Heart left ventricle (tissue), 16 donors: ENCODE measurements at regions of chr14 and their contacts with region 1.

Region 1: GRCh38 chr14:68248481-68249255 is 429.1 kb downstream of the RAD51B start:
- DNase-seq: peak in 3 of 5 donors; percentile 32 to 66 (median 39)
- ATAC-seq: peak; percentile 56 to 75 (median 70)
- H3K4me3 ChIP-seq: no peak overlapping the region
- H3K27ac ChIP-seq: peak overlapping the region in 11 of 12 donors; percentile 23 to 91 (median 85)
- H3K4me1 ChIP-seq: peaks cover 17 to 84% (median 78%) of the 10 kb centered on the region in 12 donors
- H3K27me3 ChIP-seq: no peaks in the 10 kb centered on the region
- CTCF ChIP-seq: peak; percentile 54 to 80 (median 68)
- POLR2A ChIP-seq: no peak

Region 2: GRCh38 chr14:68146807-68147206 is 101.9 kb before region 1 on chr14:
- intact Hi-C with region 1: loop called in 3 of 10 experiments (anchors 1 to 5 kb)
- DNase-seq: no peak
- ATAC-seq: peak in 2 of 4 donors; percentile 14 to 36
- H3K4me3 ChIP-seq: no peak overlapping the region
- H3K27ac ChIP-seq: peak overlapping the region in 9 of 12 donors; percentile 15 to 89 (median 64)
- H3K4me1 ChIP-seq: peaks cover 0 to 40% (median 20%) of the 10 kb centered on the region in 12 donors
- H3K27me3 ChIP-seq: no peaks in the 10 kb centered on the region
- CTCF ChIP-seq: no peak
- POLR2A ChIP-seq: no peak

Region 3: DNA sequence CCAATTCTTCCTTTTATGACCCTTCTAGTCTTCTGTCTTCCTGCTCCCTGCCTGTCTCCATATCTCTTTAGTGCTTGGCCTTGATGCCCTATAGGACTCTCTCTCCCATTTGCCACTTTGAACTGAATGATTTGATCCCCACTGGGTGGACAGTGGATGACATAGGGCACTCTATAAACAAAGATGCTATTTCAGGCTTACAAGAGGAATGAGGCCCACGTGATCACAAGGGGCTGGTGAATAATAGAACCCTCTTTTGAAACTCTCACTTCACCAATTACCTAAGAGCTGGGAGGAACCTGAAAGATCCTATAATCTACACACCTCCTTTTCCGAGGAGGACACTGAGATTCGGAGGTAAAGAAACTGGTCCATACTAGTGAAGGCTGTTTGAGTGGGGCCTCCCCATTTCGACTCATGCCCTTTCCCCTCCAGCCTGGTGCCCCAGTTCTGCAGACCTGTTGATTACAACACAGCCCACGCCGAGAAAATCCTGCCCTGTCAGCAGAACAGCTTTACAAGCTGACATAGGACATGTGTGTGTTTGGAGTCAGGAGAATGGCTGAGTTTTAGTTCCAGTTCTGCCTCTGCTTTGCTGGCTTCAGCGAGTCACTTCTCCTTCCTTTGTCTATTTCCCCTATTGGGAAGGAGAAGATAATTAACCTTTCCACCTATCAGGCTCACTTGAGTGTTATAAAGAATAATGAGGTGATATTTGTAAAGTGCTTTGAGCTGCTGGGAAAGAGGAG is 143.9 kb after region 1 on chr14:
- intact Hi-C with region 1: loop called in 2 of 10 experiments (anchors 10 kb)
- DNase-seq: peak; percentile 62 to 80 (median 73)
- ATAC-seq: peak in 3 of 4 donors; percentile 47 to 52 (median 50)
- H3K4me3 ChIP-seq: no peak overlapping the region
- H3K27ac ChIP-seq: peak overlapping the region; percentile 46 to 92 (median 66)
- H3K4me1 ChIP-seq: peaks cover 4 to 75% (median 31%) of the 10 kb centered on the region in 12 donors
- H3K27me3 ChIP-seq: no peaks in the 10 kb centered on the region
- CTCF ChIP-seq: no peak
- POLR2A ChIP-seq: no peak

Region 4: GRCh38 chr14:68520637-68521556 is 272.2 kb after region 1 on chr14:
- intact Hi-C with region 1: loop called in 4 of 10 experiments (anchors 1 to 10 kb)
- DNase-seq: no peak
- ATAC-seq: peak in 1 of 4 donors; percentile 30
- H3K4me3 ChIP-seq: no peak overlapping the region
- H3K27ac ChIP-seq: peak overlapping the region in 7 of 12 donors; percentile 51 to 74 (median 60)
- H3K4me1 ChIP-seq: peaks cover 0 to 74% (median 49%) of the 10 kb centered on the region in 12 donors
- H3K27me3 ChIP-seq: no peaks in the 10 kb centered on the region
- CTCF ChIP-seq: no peak
- POLR2A ChIP-seq: no peak

Region 5: DNA sequence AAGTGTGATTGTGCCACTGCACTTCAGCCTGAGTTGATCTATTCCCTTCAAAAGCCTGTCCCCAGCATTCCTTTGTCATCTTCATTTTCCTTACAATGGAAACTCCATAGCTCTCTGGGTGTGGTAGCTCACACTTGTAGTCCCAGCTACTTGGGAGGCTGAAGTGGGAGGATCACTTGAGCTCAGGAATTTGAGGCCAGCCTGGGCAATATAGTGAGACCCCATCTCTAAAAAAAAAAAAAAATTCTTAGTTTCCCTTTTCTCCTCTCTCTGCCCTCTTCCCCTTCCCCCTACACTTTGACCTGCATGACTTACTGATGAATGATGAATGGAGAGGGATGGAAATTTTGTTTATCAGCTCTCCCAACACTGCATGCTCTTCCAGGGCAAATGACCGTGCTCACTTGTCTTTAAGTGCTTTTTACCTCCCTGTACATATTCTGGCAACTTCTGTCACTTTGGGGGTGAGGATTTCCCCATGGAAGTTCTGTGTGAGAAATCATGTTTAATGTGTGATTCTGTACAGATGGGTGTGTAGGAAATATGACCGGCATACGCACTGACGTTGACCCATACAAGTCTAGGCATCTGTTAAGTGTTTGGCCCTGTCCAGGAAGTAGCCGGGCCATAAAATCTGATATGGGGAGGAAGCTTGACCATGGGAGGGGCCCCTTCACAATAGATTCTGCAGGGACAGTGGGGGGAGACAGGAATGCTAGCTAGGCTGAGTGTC is 478.8 kb after region 1 on chr14:
- intact Hi-C with region 1: loop called in 2 of 10 experiments (anchors 5 kb)
- DNase-seq: peak in 4 of 5 donors; percentile 36 to 57 (median 48)
- ATAC-seq: peak; percentile 34 to 81 (median 62)
- H3K4me3 ChIP-seq: no peak overlapping the region
- H3K27ac ChIP-seq: peak overlapping the region in 9 of 12 donors; percentile 1 to 78 (median 51)
- H3K4me1 ChIP-seq: peaks cover 4 to 59% (median 39%) of the 10 kb centered on the region in 12 donors
- H3K27me3 ChIP-seq: no peaks in the 10 kb centered on the region
- CTCF ChIP-seq: no peak
- POLR2A ChIP-seq: no peak

Region 6: GRCh38 chr14:68816262-68816942 is 567.7 kb after region 1 on chr14:
- intact Hi-C with region 1: loop called (anchors 1 to 5 kb)
- DNase-seq: peak; percentile 91 to 96 (median 92)
- ATAC-seq: peak; percentile 89 to 96 (median 94)
- H3K4me3 ChIP-seq: peak overlapping the region; percentile 17 to 70 (median 56)
- H3K27ac ChIP-seq: peak overlapping the region; percentile 96 to 100 (median 98)
- H3K4me1 ChIP-seq: peaks cover 0 to 61% (median 36%) of the 10 kb centered on the region in 12 donors
- H3K27me3 ChIP-seq: no peaks in the 10 kb centered on the region
- CTCF ChIP-seq: peak in 11 of 12 donors; percentile 94 to 99 (median 97)
- POLR2A ChIP-seq: peak in 1 of 2 donors; percentile 51